ENCODE measurements at regions of chr2 and their contacts with region 1.

Region 1: GRCh38 chr2:20755132-20755800 is 67.6 kb downstream of the LDAH start:
- DNase-seq: peak; percentile 13 to 34 (median 30)
- H3K4me3 ChIP-seq: no peak overlapping the region
- H3K27ac ChIP-seq: no peak overlapping the region
- H3K4me1 ChIP-seq: no peaks in the 10 kb centered on the region
- H3K27me3 ChIP-seq: no peaks in the 10 kb centered on the region

Region 2: GRCh38 chr2:20682167-20682920 is 72.9 kb before region 1 on chr2:
- CTCF ChIA-PET with region 1: interaction called, 10 read pairs
- POLR2A ChIA-PET with region 1: no interaction called
- DNase-seq: peak in 1 of 3 donors; percentile 35
- H3K4me3 ChIP-seq: no peak overlapping the region
- H3K27ac ChIP-seq: no peak overlapping the region
- H3K4me1 ChIP-seq: peaks cover 0 to 8% (median 3%) of the 10 kb centered on the region in 4 experiments
- H3K27me3 ChIP-seq: no peaks in the 10 kb centered on the region